ENCODE measurements at regions of chr10 and their contacts with region 1.

Region 1: DNA sequence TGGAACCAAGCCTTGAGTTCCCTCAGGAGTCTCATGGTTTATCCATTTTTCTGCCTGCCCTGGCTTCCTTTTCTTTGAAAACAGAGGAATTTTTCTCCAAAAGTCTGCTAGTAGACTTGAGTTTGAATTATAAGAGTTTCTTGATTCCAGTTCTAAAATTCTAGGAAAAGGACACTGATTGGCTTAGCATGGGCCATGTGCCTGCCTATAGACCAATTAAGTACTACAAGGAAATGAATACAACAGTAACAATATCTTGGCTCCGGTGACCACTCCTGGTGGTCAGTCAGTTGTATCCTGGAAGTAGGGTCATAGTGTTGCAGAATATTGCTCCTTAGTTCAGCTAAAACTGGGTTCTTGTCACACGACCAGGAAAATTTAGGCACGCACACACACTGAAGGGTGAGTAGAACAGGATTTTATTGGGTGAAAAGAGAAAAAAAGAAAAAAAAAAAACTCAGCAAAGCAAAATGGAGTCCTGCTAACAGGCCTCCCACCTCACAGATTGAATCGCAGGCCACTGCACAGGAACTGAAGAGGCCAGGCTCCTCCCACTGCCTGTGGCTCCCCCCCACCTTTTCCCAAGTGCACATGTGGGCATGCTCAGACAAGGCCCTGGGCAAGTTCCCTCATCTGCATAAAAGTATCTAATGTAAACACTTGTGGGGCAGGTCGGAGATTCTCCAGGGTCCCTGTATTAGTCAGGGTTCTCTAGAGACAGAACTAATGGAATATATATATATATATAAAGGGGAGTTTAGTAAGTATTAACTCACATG is 155.1 kb downstream of the LYZL1 start:
- DNase-seq: peak; percentile 21
- ATAC-seq: no peak
- H3K4me3 Mint-ChIP-seq: no peak overlapping the region
- H3K27ac Mint-ChIP-seq: no peak overlapping the region
- H3K4me1 Mint-ChIP-seq: peaks cover 12% of the 10 kb centered on the region
- H3K27me3 Mint-ChIP-seq: no peaks in the 10 kb centered on the region

Region 2: DNA sequence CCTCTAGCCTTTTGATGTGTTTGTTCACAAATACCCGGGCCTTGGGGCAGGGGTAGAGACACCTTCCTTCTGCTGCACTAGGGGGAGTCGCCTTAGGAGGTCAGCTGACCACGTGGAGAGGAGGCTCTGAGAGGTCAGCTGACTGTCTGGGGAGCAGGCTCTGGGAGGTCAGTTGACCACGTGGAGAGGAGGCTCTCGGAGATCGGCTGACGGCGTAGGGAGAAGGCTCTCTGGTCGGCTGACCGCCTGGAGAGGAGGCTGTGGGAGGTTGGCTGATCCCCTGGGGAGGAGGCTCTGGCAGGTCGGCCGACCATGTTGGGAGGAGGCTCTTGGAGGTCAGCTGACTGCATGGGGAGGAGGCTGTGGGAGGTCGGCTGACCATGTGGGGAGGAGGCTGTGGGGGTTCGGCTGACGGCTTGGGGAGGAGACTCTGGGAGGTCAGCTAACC is 214.7 kb before region 1 on chr10:
- CTCF ChIA-PET with region 1: no interaction called
- POLR2A ChIA-PET with region 1: no interaction called
- intact Hi-C with region 1: no loop called
- DNase-seq: no peak
- ATAC-seq: no peak
- H3K4me3 Mint-ChIP-seq: no peak overlapping the region
- H3K27ac Mint-ChIP-seq: no peak overlapping the region
- H3K4me1 Mint-ChIP-seq: no peaks in the 10 kb centered on the region
- H3K27me3 Mint-ChIP-seq: peaks cover 6% of the 10 kb centered on the region

Region 3: GRCh38 chr10:29386342-29386999 is 57.5 kb before region 1 on chr10:
- CTCF ChIA-PET with region 1: interaction called, 4 read pairs
- POLR2A ChIA-PET with region 1: no interaction called
- intact Hi-C with region 1: loop called (anchors 1 to 2 kb)
- DNase-seq: peak; percentile 33
- ATAC-seq: peak; percentile 49
- H3K4me3 Mint-ChIP-seq: no peak overlapping the region
- H3K27ac Mint-ChIP-seq: no peak overlapping the region
- H3K4me1 Mint-ChIP-seq: no peaks in the 10 kb centered on the region
- H3K27me3 Mint-ChIP-seq: peaks cover 4% of the 10 kb centered on the region

Measured in activated CD4-positive, alpha-beta T cell treated with anti-CD3 and anti-CD28 coated beads for 36 hours (primary cell).